ENCODE measurements at regions of chr13 and their contacts with region 1.

Region 1: GRCh38 chr13:77056382-77056781 is 29.4 kb upstream of the FBXL3 start:
- DNase-seq: no peak
- ATAC-seq: no peak

Region 2: GRCh38 chr13:77143435-77143834 is 87.1 kb after region 1 on chr13:
- intact Hi-C with region 1: loop called in 1 of 2 experiments (anchors 10 kb)
- DNase-seq: no peak
- ATAC-seq: no peak

Region 3: DNA sequence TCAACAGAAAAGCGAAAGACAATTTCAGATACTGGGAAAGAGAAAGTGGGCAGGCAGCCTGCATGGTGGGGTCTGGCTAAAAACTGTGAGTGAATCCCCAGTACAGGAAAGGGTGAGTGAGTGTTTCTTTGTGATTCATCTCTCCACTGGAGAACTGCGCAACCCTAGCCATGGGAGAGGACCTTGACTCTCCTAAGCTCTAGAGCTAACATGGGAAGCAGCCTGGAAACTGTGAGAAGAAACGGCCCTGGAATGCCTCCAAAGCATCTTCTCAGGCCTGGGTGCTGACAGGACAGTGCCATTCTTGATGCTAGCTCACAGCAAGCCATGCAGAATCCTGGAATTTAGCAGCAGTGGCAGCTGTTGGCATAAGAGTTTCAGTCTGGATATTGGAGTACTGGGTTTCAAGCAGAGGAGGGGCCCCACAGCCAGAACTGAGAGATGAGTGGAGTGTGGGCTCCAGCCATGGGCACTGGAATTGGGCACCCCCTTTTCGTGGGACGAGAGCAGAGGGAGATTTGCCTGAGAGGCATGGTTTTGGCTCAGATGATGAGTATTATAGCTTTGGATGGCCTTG is 622.4 kb after region 1 on chr13:
- intact Hi-C with region 1: no loop called
- DNase-seq: no peak
- ATAC-seq: peak in 1 of 2 donors; percentile 38

Measured in left cardiac atrium (tissue), 4 donors.